Calu3 (cell line): ENCODE measurements at regions of chr3 and their contacts with region 1.

Region 1: DNA sequence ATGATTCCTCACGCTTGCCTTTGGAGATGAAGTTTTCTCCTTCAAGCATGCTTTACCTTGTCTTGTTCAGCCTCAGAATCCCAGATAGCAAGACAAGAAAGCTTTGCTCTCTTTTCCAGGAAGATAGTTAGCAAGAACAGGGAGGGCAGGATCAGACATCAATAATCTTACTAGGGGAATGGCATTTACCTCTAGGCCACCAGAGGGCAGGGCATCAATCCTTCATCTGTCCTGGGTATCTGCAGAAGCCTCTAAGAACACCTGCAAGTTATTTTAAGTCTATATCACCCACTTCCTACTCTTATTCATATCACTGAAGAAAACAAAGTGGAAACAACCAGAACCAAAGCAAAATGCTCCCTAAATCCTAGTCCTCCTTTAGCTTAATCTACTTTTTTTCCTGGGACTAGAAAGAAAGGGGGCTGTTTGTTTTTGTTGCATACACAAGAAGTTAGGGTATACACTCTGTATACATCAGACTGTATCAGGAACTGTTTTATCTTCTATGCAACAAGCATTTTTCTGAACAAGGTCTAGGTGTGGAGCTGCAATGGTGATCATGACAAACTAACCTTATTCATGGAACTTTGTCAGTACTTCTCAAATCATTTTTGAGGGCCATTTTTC is 862.5 kb downstream of the CADM2 start:
- DNase-seq: peak; percentile 51
- H3K4me3 Mint-ChIP-seq: no peak overlapping the region
- H3K27ac Mint-ChIP-seq: no peak overlapping the region
- H3K4me1 Mint-ChIP-seq: no peaks in the 10 kb centered on the region
- H3K27me3 Mint-ChIP-seq: no peaks in the 10 kb centered on the region
- CTCF ChIP-seq: peak; percentile 49

Region 2: GRCh38 chr3:85875589-85875988 is 54.3 kb after region 1 on chr3:
- CTCF ChIA-PET with region 1: no interaction called
- intact Hi-C with region 1: no loop called
- DNase-seq: no peak
- H3K4me3 Mint-ChIP-seq: no peak overlapping the region
- H3K27ac Mint-ChIP-seq: no peak overlapping the region
- H3K4me1 Mint-ChIP-seq: no peaks in the 10 kb centered on the region
- H3K27me3 Mint-ChIP-seq: no peaks in the 10 kb centered on the region
- CTCF ChIP-seq: no peak

Region 3: GRCh38 chr3:86245360-86245759 is 424.1 kb after region 1 on chr3:
- CTCF ChIA-PET with region 1: no interaction called
- intact Hi-C with region 1: loop called (anchors 1 kb)
- DNase-seq: no peak
- H3K4me3 Mint-ChIP-seq: no peak overlapping the region
- H3K27ac Mint-ChIP-seq: no peak overlapping the region
- H3K4me1 Mint-ChIP-seq: no peaks in the 10 kb centered on the region
- H3K27me3 Mint-ChIP-seq: no peaks in the 10 kb centered on the region
- CTCF ChIP-seq: no peak